ENCODE measurements at regions of chr6 and their contacts with region 1.

Region 1: GRCh38 chr6:106512048-106512967 is 117.0 kb downstream of the RTN4IP1 start:
- DNase-seq: peak; percentile 66 to 91 (median 72)
- ATAC-seq: peak; percentile 73
- H3K4me3 ChIP-seq: peak overlapping the region; percentile 99
- H3K4me3 Mint-ChIP-seq: peak overlapping the region; percentile 96
- H3K27ac ChIP-seq: peak overlapping the region; percentile 95 to 96
- H3K27ac Mint-ChIP-seq: peak overlapping the region; percentile 97
- H3K4me1 ChIP-seq: peaks cover 48% of the 10 kb centered on the region
- H3K4me1 Mint-ChIP-seq: peaks cover 55% of the 10 kb centered on the region
- H3K27me3 ChIP-seq: no peaks in the 10 kb centered on the region
- H3K27me3 Mint-ChIP-seq: peaks cover 12% of the 10 kb centered on the region
- CTCF ChIP-seq: peak; percentile 67

Region 2: DNA sequence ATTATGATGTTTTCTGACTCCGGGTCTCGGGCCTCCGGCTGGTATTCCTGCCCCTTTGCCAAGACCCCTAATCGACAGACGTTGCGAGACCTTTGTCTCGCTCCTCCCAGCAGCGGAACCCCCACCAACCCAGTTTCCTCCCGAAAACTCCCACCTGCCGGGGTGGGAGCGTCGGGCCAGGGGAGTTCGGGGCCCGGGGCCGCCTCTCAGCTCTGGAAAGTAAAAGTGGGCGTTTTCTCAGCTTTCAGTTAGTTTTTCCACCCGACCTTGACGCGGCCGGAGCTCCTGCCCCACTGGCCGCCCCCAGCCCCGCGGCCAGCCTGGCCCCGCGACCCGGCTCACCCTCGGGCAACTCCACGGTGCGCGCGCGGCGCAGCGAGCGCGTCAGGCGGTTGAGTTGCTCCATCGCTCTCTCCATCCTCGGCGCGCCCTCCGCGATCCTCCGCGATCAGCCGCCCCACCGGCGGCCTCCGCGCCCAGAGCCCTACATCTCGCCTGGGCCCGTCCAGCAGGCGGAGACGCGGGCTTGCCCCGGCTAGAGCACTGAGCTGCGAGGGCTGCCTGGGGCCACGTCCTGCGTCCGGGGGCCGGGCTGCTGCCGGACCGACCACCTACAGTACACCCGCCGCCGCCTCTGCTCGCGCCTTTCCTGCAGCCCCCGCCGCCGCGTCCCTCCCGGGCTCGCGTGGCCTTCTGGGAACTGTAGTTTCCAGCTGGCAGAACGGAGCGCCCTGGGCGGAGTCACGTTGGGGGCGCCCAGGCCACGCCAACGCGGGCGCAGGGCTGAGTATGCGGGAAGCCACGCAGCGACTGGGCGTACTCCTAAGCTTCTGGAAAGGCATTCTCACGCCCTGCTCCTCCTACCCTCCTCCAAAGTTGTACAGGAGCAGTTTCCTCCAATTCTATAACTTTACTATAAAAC is 1652.8 kb before region 1 on chr6 and contains the start of gene HACE1:
- CTCF ChIA-PET with region 1: no interaction called
- POLR2A ChIA-PET with region 1: no interaction called
- intact Hi-C with region 1: loop called in 1 of 2 experiments (anchors 10 kb)
- DNase-seq: peak; percentile 76 to 91 (median 84)
- ATAC-seq: peak; percentile 98
- H3K4me3 ChIP-seq: peak within 1 kb of the TSS; percentile 80
- H3K4me3 Mint-ChIP-seq: peak within 1 kb of the TSS; percentile 96
- H3K27ac ChIP-seq: peak within 1 kb of the TSS in 1 of 2 donors; percentile 7
- H3K27ac Mint-ChIP-seq: peak within 1 kb of the TSS; percentile 70
- H3K4me1 ChIP-seq: peaks cover 12% of the 10 kb centered on the region
- H3K4me1 Mint-ChIP-seq: peaks cover 18% of the 10 kb centered on the region
- H3K27me3 ChIP-seq: no peaks in the 10 kb centered on the region
- H3K27me3 Mint-ChIP-seq: peaks cover 15% of the 10 kb centered on the region
- CTCF ChIP-seq: peak; percentile 17
- total RNA-seq, gene HACE1: 7.4 to 8.2 TPM

Region 3: GRCh38 chr6:106325336-106326178 is 186.8 kb before region 1 on chr6 and contains the start of gene ATG5:
- CTCF ChIA-PET with region 1: no interaction called
- POLR2A ChIA-PET with region 1: interaction called, 9 read pairs
- intact Hi-C with region 1: loop called in 1 of 2 experiments (anchors 5 kb)
- DNase-seq: peak; percentile 98 to 100 (median 100)
- ATAC-seq: peak; percentile 92
- H3K4me3 ChIP-seq: peak within 1 kb of the TSS; percentile 92
- H3K4me3 Mint-ChIP-seq: peak within 1 kb of the TSS; percentile 99
- H3K27ac ChIP-seq: peak within 1 kb of the TSS; percentile 85 to 91
- H3K27ac Mint-ChIP-seq: peak within 1 kb of the TSS; percentile 96
- H3K4me1 ChIP-seq: peaks cover 22% of the 10 kb centered on the region
- H3K4me1 Mint-ChIP-seq: peaks cover 50% of the 10 kb centered on the region
- H3K27me3 ChIP-seq: peaks cover 0 to 12% of the 10 kb centered on the region in 2 experiments
- H3K27me3 Mint-ChIP-seq: peaks cover 19% of the 10 kb centered on the region
- CTCF ChIP-seq: no peak
- total RNA-seq, gene ATG5: 19.4 to 23.2 TPM

Region 4: GRCh38 chr6:106444777-106445507 is 67.4 kb before region 1 on chr6:
- CTCF ChIA-PET with region 1: interaction called, 4 read pairs
- POLR2A ChIA-PET with region 1: interaction called, 3 read pairs
- intact Hi-C with region 1: loop called (anchors 1 to 2 kb)
- DNase-seq: peak in 4 of 14 experiments; percentile 49 to 83 (median 81)
- ATAC-seq: peak; percentile 88
- H3K4me3 ChIP-seq: no peak overlapping the region
- H3K4me3 Mint-ChIP-seq: no peak overlapping the region
- H3K27ac ChIP-seq: no peak overlapping the region
- H3K27ac Mint-ChIP-seq: no peak overlapping the region
- H3K4me1 ChIP-seq: peaks cover 9% of the 10 kb centered on the region
- H3K4me1 Mint-ChIP-seq: peaks cover 15% of the 10 kb centered on the region
- H3K27me3 ChIP-seq: peaks cover 4 to 23% of the 10 kb centered on the region in 2 experiments
- H3K27me3 Mint-ChIP-seq: peaks cover 30% of the 10 kb centered on the region
- CTCF ChIP-seq: peak; percentile 78

Region 5: DNA sequence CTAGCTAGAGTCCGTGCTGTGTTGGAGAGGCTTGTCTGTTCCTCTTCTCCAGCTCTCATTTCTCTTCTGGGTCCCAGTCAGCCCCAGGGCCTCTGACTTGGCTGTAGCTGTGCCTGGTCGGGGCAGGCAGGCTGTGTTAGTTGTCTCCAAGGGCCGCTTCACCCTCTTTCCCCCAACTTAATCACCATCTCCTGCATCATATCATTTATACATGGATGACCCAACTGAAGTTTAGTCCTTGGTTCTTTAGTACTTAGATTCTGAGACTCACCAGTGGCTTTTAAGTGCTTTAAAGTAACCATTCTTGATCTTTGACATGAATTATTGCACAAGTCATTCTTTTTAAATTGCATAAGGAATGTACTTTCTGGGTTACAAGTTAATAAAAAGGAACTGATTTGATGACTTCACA is 10.3 kb before region 1 on chr6:
- CTCF ChIA-PET with region 1: no interaction called
- POLR2A ChIA-PET with region 1: no interaction called
- intact Hi-C with region 1: no loop called
- DNase-seq: peak in 1 of 14 experiments; percentile 37
- ATAC-seq: no peak
- H3K4me3 ChIP-seq: no peak overlapping the region
- H3K4me3 Mint-ChIP-seq: no peak overlapping the region
- H3K27ac ChIP-seq: no peak overlapping the region
- H3K27ac Mint-ChIP-seq: no peak overlapping the region
- H3K4me1 ChIP-seq: no peaks in the 10 kb centered on the region
- H3K4me1 Mint-ChIP-seq: no peaks in the 10 kb centered on the region
- H3K27me3 ChIP-seq: no peaks in the 10 kb centered on the region
- H3K27me3 Mint-ChIP-seq: no peaks in the 10 kb centered on the region
- CTCF ChIP-seq: no peak

Region 6: DNA sequence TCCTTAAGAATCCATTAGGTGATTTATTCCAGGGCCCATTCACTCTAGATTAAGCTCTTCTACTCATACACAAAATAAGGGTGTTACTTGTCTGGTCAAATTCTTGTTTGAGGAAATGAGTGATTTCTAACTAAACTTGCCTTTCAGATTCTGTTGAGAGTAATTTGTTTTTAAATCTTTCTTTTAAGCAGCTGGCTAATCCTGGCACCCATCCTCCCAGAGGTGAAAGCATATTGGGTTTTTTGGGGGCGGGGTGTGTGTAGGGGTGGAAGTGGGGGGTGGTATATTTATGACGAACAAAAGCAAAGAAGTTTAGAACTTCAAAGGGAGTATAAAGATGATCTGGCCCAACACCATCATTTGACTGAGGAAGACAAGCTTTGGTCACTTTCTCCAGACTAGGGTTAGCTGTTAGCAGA is 22.3 kb after region 1 on chr6:
- CTCF ChIA-PET with region 1: interaction called, 31 read pairs
- POLR2A ChIA-PET with region 1: interaction called, 21 read pairs
- intact Hi-C with region 1: no loop called
- DNase-seq: peak in 5 of 14 experiments; percentile 28 to 55 (median 46)
- ATAC-seq: peak; percentile 49
- H3K4me3 ChIP-seq: no peak overlapping the region
- H3K4me3 Mint-ChIP-seq: no peak overlapping the region
- H3K27ac ChIP-seq: no peak overlapping the region
- H3K27ac Mint-ChIP-seq: peak overlapping the region; percentile 17
- H3K4me1 ChIP-seq: peaks cover 24% of the 10 kb centered on the region
- H3K4me1 Mint-ChIP-seq: peaks cover 90% of the 10 kb centered on the region
- H3K27me3 ChIP-seq: no peaks in the 10 kb centered on the region
- H3K27me3 Mint-ChIP-seq: no peaks in the 10 kb centered on the region
- CTCF ChIP-seq: no peak

Region 7: DNA sequence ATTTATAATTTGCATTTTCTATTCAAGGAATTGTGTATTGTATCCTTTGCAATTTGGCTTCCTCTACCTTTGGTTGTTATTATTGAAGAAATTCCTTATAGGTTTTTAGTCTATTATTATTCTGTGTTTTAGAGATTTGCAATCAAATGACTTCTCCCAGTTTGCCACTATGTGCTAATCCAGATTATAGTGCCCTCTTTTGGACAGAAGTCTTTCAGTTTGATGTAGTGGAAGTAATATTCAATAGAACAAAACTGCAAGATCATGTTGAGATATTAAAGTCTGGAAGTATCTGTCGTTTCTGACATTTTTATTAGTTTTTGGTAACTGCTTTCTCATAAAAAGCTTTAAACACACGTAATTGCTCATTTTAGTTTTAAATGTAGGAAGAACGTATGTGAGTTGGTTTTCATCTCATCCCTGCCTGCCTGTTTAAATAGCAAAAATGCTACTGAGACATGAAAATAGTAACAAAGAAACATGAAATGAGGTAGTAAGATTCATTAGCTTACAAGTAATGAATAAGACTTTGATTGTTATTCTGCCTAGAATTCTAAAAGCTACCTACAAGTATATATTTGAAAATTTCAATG is 44.2 kb after region 1 on chr6:
- CTCF ChIA-PET with region 1: interaction called, 9 read pairs
- POLR2A ChIA-PET with region 1: interaction called, 14 read pairs
- intact Hi-C with region 1: loop called (anchors 1 kb)
- DNase-seq: peak in 3 of 14 experiments; percentile 63 to 68 (median 64)
- ATAC-seq: peak; percentile 58
- H3K4me3 ChIP-seq: no peak overlapping the region
- H3K4me3 Mint-ChIP-seq: no peak overlapping the region
- H3K27ac ChIP-seq: no peak overlapping the region
- H3K27ac Mint-ChIP-seq: no peak overlapping the region
- H3K4me1 ChIP-seq: no peaks in the 10 kb centered on the region
- H3K4me1 Mint-ChIP-seq: no peaks in the 10 kb centered on the region
- H3K27me3 ChIP-seq: no peaks in the 10 kb centered on the region
- H3K27me3 Mint-ChIP-seq: no peaks in the 10 kb centered on the region
- CTCF ChIP-seq: peak; percentile 75

Region 8: GRCh38 chr6:106629103-106629858 is 117.0 kb after region 1 on chr6 and contains the starts of genes QRSL1 and RTN4IP1:
- CTCF ChIA-PET with region 1: interaction called, 3 read pairs
- POLR2A ChIA-PET with region 1: no interaction called
- intact Hi-C with region 1: loop called in 1 of 2 experiments (anchors 5 kb)
- DNase-seq: peak; percentile 67 to 95 (median 78)
- ATAC-seq: peak; percentile 94
- H3K4me3 ChIP-seq: peak within 1 kb of the TSS; percentile 79
- H3K4me3 Mint-ChIP-seq: peak within 1 kb of the TSS; percentile 97
- H3K27ac ChIP-seq: peak within 1 kb of the TSS; percentile 64 to 83
- H3K27ac Mint-ChIP-seq: peak within 1 kb of the TSS; percentile 96
- H3K4me1 ChIP-seq: peaks cover 15% of the 10 kb centered on the region
- H3K4me1 Mint-ChIP-seq: peaks cover 42% of the 10 kb centered on the region
- H3K27me3 ChIP-seq: no peaks in the 10 kb centered on the region
- H3K27me3 Mint-ChIP-seq: no peaks in the 10 kb centered on the region
- CTCF ChIP-seq: no peak
- total RNA-seq, gene QRSL1: 7.3 to 9.3 TPM
- total RNA-seq, gene RTN4IP1: 2.4 to 2.5 TPM

Region 9: DNA sequence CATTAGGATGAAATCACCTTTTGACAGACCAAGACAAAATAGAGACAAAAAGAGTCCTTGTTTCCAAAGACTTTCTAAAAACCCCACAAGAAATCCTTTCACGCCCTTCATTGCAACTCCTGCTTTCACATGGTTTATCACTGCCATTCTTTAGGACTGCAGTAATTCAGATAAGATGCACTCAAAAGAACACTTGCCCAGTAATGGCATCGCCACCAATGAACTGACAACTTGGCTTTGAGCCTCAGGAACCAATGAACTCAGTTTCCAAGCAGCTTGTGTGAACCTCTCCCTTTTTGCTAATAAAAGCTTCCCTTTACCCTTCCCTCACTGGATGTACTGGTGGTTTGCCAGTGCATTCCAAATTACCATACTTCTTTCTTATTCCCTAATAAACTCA is 1540.4 kb after region 1 on chr6:
- CTCF ChIA-PET with region 1: no interaction called
- POLR2A ChIA-PET with region 1: no interaction called
- intact Hi-C with region 1: no loop called
- DNase-seq: no peak
- ATAC-seq: no peak
- H3K4me3 ChIP-seq: no peak overlapping the region
- H3K4me3 Mint-ChIP-seq: no peak overlapping the region
- H3K27ac ChIP-seq: no peak overlapping the region
- H3K27ac Mint-ChIP-seq: no peak overlapping the region
- H3K4me1 ChIP-seq: no peaks in the 10 kb centered on the region
- H3K4me1 Mint-ChIP-seq: no peaks in the 10 kb centered on the region
- H3K27me3 ChIP-seq: no peaks in the 10 kb centered on the region
- H3K27me3 Mint-ChIP-seq: no peaks in the 10 kb centered on the region
- CTCF ChIP-seq: no peak

Measured in CD4-positive, alpha-beta T cell (primary cell).